Heart left ventricle (tissue), 16 donors: ENCODE measurements at regions of chr11 and their contacts with region 1.

Region 1: DNA sequence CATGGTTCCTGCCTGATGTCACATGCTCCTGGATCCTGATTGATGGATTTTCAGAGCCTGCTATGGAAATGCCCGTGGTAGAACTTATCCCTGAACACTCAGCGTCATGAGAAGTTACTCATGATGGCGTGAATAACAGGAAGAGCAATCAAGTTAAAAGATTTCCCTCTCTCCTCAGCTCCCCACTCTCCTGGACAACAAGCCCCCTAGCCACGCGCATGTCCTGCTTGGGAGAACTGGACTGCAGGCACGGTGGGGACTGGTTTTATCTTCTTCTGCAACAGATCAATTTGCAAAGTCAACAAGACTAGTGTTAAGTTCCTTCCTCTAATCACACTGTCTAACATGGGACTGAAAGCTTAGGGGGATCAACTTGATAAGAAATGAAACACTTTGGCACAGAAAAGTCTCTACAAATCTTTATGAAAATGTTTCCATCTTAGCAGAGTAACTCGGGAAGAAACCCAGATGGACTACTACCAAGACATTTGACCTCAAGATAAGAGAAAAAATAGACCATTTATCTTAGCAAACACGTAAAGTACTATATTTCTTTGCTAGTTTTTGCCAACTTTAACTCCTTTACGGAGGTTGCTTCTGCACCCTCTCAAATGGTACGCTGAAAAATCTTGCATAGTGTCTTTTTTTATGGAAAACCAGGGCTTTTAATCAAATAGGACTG is 27.6 kb downstream of the POU2AF1 start:
- DNase-seq: no peak
- ATAC-seq: no peak
- H3K4me3 ChIP-seq: no peak overlapping the region
- H3K27ac ChIP-seq: peak overlapping the region in 1 of 12 donors; percentile 39
- H3K4me1 ChIP-seq: peaks cover 0 to 9% (median 0%) of the 10 kb centered on the region in 12 donors
- H3K27me3 ChIP-seq: peaks cover 0 to 4% (median 0%) of the 10 kb centered on the region in 9 donors
- CTCF ChIP-seq: no peak
- POLR2A ChIP-seq: no peak

Region 2: GRCh38 chr11:111367411-111368284 is 16.1 kb after region 1 on chr11:
- intact Hi-C with region 1: loop called in 1 of 10 experiments (anchors 2 kb)
- DNase-seq: no peak
- ATAC-seq: no peak
- H3K4me3 ChIP-seq: no peak overlapping the region
- H3K27ac ChIP-seq: no peak overlapping the region
- H3K4me1 ChIP-seq: no peaks in the 10 kb centered on the region
- H3K27me3 ChIP-seq: no peaks in the 10 kb centered on the region
- CTCF ChIP-seq: no peak
- POLR2A ChIP-seq: no peak

Region 3: DNA sequence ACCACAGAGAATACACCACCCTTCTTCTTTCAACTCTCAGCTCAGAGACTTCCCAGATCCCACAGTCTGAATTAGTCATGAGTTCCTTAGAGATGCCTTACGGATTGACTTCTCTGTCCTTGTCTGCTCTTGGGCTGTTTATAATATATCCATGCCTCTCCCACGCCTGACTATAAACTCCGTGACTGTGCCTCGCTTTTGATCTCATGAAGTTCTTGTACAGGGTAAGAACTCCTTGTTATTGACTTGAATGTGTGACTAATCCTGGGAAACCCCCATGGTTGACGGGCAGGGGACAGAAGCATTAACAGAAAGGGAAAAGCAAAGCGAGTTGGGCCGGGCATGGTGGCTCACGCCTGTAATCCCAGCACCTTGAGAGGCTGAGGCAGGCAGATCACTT is 89.9 kb after region 1 on chr11:
- intact Hi-C with region 1: no loop called
- DNase-seq: no peak
- ATAC-seq: no peak
- H3K4me3 ChIP-seq: no peak overlapping the region
- H3K27ac ChIP-seq: peak overlapping the region in 1 of 12 donors; percentile 56
- H3K4me1 ChIP-seq: peaks cover 0 to 16% (median 9%) of the 10 kb centered on the region in 12 donors
- H3K27me3 ChIP-seq: no peaks in the 10 kb centered on the region
- CTCF ChIP-seq: no peak
- POLR2A ChIP-seq: no peak